ENCODE measurements at regions of chr3 and their contacts with region 1.

Region 1: GRCh38 chr3:17831366-17831765 is 88.9 kb upstream of the TBC1D5 start:
- DNase-seq: no peak
- ATAC-seq: no peak
- H3K4me3 ChIP-seq: no peak overlapping the region
- H3K27ac ChIP-seq: no peak overlapping the region
- H3K4me1 ChIP-seq: no peaks in the 10 kb centered on the region
- H3K27me3 ChIP-seq: no peaks in the 10 kb centered on the region
- CTCF ChIP-seq: no peak

Region 2: GRCh38 chr3:17544632-17545031 is 286.7 kb before region 1 on chr3:
- intact Hi-C with region 1: loop called in 1 of 10 experiments (anchors 10 kb)
- DNase-seq: no peak
- ATAC-seq: no peak
- H3K4me3 ChIP-seq: no peak overlapping the region
- H3K27ac ChIP-seq: no peak overlapping the region
- H3K4me1 ChIP-seq: no peaks in the 10 kb centered on the region
- H3K27me3 ChIP-seq: no peaks in the 10 kb centered on the region
- CTCF ChIP-seq: peak in 3 of 9 donors; percentile 18 to 36 (median 19)

Region 3: GRCh38 chr3:18481946-18482548 is 650.7 kb after region 1 on chr3:
- intact Hi-C with region 1: no loop called
- DNase-seq: no peak
- ATAC-seq: no peak
- H3K4me3 ChIP-seq: no peak overlapping the region
- H3K27ac ChIP-seq: no peak overlapping the region
- H3K4me1 ChIP-seq: no peaks in the 10 kb centered on the region
- H3K27me3 ChIP-seq: no peaks in the 10 kb centered on the region
- CTCF ChIP-seq: no peak